Head of caudate nucleus (tissue), 42 donors: ENCODE measurements at regions of chr5 and their contacts with region 1.

Region 1: GRCh38 chr5:96752341-96753016 is 55.3 kb downstream of the ERAP1 start:
- DNase-seq: peak in 14 of 42 donors; percentile 32 to 86 (median 68)

Region 2: DNA sequence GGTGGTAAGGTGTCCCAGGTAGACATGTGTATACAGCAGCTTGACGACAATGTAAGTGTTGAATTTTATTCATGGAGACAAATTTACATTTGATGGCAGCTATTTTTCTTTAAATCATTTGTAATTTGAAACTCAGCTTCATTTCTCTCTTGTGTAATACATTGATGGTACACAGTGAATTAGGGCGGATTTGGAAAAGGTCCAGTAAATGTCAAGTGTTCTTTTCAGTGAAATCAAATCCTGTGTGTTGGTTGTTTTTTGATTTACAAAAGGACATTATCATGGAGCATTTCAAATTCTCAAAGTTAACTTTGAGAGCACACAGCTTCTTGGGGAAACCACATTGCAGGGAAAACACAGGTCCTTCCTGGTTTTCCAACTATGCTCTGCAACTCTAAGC is 289.4 kb before region 1 on chr5:
- intact Hi-C with region 1: no loop called
- DNase-seq: no peak

Region 3: GRCh38 chr5:96572864-96573512 is 179.5 kb before region 1 on chr5:
- intact Hi-C with region 1: no loop called
- DNase-seq: no peak

Region 4: DNA sequence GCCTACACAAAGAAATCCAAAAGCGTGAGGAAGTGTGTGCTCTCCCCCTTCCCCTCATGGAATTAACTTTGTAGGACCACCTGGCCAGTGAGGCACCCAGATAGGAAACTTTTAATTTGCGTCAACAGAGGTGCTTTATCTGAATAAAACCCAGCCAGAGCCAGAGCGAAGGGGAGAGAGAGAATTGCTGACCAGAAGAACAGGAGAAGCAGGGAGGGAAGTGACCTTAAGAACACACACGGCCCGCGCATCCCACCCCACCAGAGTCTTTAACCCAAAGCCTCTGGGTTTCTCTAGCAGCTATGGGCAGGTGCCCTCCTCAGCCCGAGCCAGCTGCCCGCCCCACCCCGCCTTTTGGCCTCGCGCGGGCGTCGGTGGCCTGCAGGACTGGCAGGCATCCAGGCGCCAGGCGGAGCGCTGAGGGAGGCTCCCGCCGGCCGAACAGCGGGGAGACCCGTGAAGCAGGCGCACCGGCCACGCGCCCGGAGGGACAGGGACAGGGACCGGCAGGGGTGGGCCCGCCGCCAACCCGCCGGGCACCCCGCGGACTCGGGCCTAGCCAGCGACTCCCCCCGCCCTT is 54.7 kb after region 1 on chr5:
- intact Hi-C with region 1: loop called (anchors 10 kb)
- DNase-seq: peak in 41 of 42 donors; percentile 48 to 91 (median 82)

Region 5: GRCh38 chr5:96942911-96943310 is 190.4 kb after region 1 on chr5:
- intact Hi-C with region 1: loop called (anchors 10 kb)
- DNase-seq: no peak

Region 6: DNA sequence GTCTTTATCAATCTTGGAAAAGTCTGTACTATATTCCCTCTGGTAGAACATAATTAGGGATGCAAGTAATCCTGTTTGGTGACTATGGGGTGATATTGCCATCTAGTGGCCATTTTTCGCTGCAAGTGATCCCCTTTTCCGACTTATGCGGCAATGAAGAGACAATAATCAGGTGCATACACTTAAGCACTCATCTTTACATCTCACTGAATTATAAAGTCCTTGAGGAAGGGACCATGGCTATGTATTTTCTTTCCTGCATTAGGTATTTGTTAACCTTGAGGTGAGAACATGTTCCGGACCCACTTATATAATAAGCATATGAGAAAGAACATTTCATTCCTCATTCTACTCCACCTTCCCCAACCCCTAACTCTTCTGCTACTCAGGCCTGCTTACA is 409.6 kb after region 1 on chr5:
- intact Hi-C with region 1: loop called (anchors 5 kb)
- DNase-seq: peak in 39 of 42 donors; percentile 17 to 91 (median 72)